Activated naive CD4-positive, alpha-beta T cell treated with anti-CD3 and anti-CD28 coated beads, Interleukin-2, amount 10 ng/mL, durations not matched to agents 7 days and 5 days (primary cell): ENCODE measurements at regions of chr15 and their contacts with region 1.

Region 1: GRCh38 chr15:71780115-71780976 is 30.0 kb upstream of the NR2E3 start:
- DNase-seq: peak; percentile 37
- H3K4me3 Mint-ChIP-seq: no peak overlapping the region
- H3K27ac Mint-ChIP-seq: no peak overlapping the region
- H3K4me1 Mint-ChIP-seq: no peaks in the 10 kb centered on the region
- H3K27me3 Mint-ChIP-seq: peaks cover 25% of the 10 kb centered on the region

Region 2: GRCh38 chr15:71752604-71753289 is 27.6 kb before region 1 on chr15:
- CTCF ChIA-PET with region 1: interaction called, 10 read pairs
- DNase-seq: no peak
- H3K4me3 Mint-ChIP-seq: no peak overlapping the region
- H3K27ac Mint-ChIP-seq: no peak overlapping the region
- H3K4me1 Mint-ChIP-seq: no peaks in the 10 kb centered on the region
- H3K27me3 Mint-ChIP-seq: peaks cover 7% of the 10 kb centered on the region